A673 (cell line): ENCODE measurements at regions of chr17 and their contacts with region 1.

Region 1: DNA sequence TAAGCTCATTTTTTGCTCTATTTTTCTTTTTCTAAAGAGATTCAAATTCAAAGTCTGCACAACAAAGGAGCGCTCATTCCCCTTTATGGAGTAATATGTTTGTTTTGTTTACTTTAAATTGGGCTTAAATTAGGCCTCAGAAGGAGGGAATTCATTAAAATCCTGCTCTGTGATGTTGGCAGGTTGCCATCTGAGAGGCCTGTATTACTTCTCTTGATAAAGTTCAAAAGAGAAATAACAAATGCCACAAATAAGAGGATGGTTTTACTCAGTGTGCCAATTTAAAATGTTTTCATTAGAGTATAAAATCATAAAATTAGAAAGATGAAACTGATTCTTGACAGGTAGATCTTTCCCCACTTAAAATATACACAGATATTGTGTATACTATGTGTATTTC is 54.5 kb upstream of the HLF start:
- DNase-seq: peak; percentile 61
- H3K4me3 ChIP-seq: no peak overlapping the region
- H3K27ac ChIP-seq: peak overlapping the region; percentile 91
- H3K4me1 ChIP-seq: peaks cover 63% of the 10 kb centered on the region
- H3K27me3 ChIP-seq: no peaks in the 10 kb centered on the region
- CTCF ChIP-seq: no peak

Region 2: DNA sequence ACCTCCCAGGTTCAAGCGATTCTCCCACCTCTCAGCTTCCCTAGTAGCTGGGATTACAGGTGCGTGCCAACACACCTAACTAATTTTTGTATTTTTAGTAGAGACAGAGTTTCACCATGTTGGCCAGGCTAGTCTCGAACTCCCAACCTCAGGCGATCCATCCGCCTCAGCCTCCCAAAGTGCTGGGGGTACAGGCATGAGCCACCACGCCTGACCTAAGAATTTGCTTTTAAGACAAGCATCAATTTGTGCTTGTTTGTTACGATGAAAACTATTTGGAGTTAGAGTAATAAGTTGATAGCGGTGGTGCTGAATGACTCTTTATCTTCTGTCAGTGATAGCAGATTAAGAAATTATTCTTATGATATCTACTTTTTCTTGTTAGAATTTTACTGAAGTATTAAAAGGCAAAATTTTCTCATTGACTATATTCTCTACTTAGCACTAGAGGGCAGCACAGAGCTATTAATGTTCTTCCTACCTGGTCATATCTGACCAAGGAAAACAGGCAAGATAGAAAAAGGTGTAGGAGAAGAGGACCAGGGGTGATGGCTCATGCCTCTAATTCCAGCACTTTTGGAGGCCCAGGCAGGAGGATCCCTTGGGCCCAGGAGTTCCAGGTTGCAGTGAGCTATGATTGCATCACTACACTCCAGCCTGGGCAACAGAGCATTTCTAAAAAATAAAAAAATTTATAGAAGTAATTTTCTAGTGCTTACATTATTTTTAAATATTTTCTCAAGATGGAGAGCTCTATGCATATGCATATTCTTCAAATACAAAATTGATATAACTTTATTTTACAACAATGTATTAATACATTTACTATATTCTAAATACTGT is 217.3 kb before region 1 on chr17:
- CTCF ChIA-PET with region 1: no interaction called
- POLR2A ChIA-PET with region 1: no interaction called
- intact Hi-C with region 1: loop called (anchors 1 kb)
- DNase-seq: peak; percentile 74
- H3K4me3 ChIP-seq: no peak overlapping the region
- H3K27ac ChIP-seq: no peak overlapping the region
- H3K4me1 ChIP-seq: no peaks in the 10 kb centered on the region
- H3K27me3 ChIP-seq: no peaks in the 10 kb centered on the region
- CTCF ChIP-seq: peak; percentile 80

Region 3: DNA sequence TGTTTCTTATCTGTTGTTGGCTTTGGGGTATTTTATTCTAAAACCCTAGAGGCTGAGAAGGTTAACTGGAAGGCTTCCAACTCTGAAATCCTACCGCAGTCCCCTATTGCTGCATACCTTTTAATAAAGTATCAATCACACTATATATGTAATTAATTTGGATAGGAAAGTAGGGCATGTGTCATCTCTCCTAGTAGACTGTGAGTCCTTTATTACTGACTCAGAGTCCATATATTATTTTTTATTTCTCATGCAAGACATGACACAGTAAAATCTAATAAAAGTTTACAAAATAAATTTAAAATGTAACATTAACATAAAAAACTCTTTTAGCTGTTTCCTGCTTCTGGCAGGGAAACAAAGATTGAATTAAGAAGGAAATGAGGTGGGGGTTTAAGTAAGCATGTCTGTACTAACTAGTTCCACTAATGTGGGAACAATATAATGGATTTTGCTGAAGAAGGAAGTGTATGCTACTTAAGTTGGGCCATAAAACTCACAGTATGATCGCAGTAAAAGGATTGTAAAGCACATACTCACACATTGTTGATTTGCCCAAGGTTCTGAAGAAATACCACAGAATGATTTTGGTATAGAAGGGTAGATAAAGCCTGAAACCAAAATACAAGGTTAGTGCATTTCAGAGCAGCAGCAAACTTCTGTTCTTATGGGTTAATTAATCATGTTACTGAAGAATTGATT is 43.1 kb before region 1 on chr17:
- CTCF ChIA-PET with region 1: interaction called, 9 read pairs
- POLR2A ChIA-PET with region 1: interaction called, 10 read pairs
- intact Hi-C with region 1: loop called (anchors 1 kb)
- DNase-seq: peak; percentile 98
- H3K4me3 ChIP-seq: no peak overlapping the region
- H3K27ac ChIP-seq: peak overlapping the region; percentile 72
- H3K4me1 ChIP-seq: peaks cover 65% of the 10 kb centered on the region
- H3K27me3 ChIP-seq: no peaks in the 10 kb centered on the region
- CTCF ChIP-seq: no peak

Region 4: GRCh38 chr17:55295411-55296170 is 85.3 kb after region 1 on chr17:
- CTCF ChIA-PET with region 1: interaction called, 3 read pairs
- POLR2A ChIA-PET with region 1: no interaction called
- intact Hi-C with region 1: loop called (anchors 2 kb)
- DNase-seq: peak; percentile 78
- H3K4me3 ChIP-seq: no peak overlapping the region
- H3K27ac ChIP-seq: no peak overlapping the region
- H3K4me1 ChIP-seq: peaks cover 22% of the 10 kb centered on the region
- H3K27me3 ChIP-seq: no peaks in the 10 kb centered on the region
- CTCF ChIP-seq: peak; percentile 87

Region 5: DNA sequence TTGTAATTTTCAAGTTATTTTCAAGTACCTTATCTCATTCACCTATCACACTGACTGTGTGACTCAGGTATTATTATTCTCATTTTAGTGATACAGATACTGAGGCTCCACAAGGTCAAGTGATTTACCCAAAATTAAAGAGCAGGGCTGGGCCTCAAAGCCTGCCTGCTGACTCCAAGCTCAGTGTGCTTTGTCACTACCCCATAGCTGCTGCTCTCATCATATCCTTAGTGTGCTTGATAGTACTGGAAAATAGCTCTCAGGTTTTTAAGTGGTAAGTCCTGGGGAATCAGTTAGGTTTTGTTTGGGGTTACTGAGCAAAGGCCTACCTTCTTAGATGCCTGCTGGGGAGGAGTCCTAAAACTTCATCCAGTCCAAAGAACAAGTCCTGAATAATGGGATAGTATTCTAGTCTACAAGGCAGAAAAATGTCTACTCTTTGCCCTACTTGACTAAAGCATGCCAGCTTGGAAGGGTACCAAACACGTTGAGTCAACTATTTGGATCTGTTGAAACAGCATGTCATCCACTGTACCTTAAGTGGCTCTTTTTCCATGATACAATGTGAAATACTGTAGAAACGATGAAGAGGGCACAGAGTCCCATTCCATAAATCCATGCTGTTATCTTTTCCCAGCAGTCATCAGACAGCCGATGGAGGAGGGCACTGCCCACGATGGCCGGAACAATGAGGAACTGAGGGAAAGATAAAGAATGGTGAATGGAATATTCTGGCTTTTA is 200.6 kb after region 1 on chr17:
- CTCF ChIA-PET with region 1: no interaction called
- POLR2A ChIA-PET with region 1: no interaction called
- intact Hi-C with region 1: no loop called
- DNase-seq: no peak
- H3K4me3 ChIP-seq: no peak overlapping the region
- H3K27ac ChIP-seq: no peak overlapping the region
- H3K4me1 ChIP-seq: no peaks in the 10 kb centered on the region
- H3K27me3 ChIP-seq: no peaks in the 10 kb centered on the region
- CTCF ChIP-seq: no peak

Region 6: DNA sequence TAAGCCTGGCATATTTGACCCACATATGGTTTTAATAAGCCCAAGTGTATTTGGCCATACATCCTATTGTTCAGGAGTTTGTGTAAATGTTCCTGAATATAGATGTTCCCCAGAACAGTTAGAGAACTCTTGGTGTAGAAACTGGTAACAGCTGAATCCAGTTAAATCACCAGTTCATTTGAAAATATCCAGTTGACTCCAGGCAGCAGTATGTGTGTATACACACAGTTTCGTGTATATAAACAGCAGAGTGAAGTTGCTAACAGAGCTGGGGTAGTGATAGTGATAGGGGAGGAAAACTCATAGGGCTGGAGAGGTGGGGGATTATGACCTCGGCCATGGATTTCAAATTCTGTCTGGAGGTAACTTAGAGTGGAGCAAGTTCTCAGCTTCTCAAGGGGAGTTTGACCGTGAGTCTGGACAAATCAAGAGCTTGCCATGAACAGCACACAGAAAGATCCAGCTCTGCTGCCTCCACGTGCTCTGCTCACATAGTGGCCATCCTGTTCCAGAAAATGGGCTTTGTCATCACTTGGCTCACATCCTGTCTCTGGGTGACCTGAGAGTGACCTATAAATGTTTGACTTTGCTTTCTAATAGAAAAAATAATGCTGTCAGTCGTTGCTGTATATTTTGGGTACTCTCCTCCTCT is 242.0 kb after region 1 on chr17:
- CTCF ChIA-PET with region 1: no interaction called
- POLR2A ChIA-PET with region 1: interaction called, 7 read pairs
- intact Hi-C with region 1: loop called (anchors 5 kb)
- DNase-seq: peak; percentile 63
- H3K4me3 ChIP-seq: no peak overlapping the region
- H3K27ac ChIP-seq: no peak overlapping the region
- H3K4me1 ChIP-seq: peaks cover 62% of the 10 kb centered on the region
- H3K27me3 ChIP-seq: no peaks in the 10 kb centered on the region
- CTCF ChIP-seq: no peak